PC-9 (cell line): ENCODE measurements at regions of chr15 and their contacts with region 1.

Region 1: GRCh38 chr15:100671858-100672543 is 69.6 kb downstream of the ASB7 start:
- DNase-seq: peak in 1 of 2 experiments; percentile 56
- H3K4me3 ChIP-seq: no peak overlapping the region
- H3K27ac ChIP-seq: peak overlapping the region; percentile 27; the same call in 1 of the 2 replicates
- H3K4me1 ChIP-seq: 0 out of 2 replicates have a peak, but pooled peaks cover 7% of the 10 kb centered on the region
- H3K27me3 ChIP-seq: no peaks in the 10 kb centered on the region
- CTCF ChIP-seq: peak; percentile 68

Region 2: DNA sequence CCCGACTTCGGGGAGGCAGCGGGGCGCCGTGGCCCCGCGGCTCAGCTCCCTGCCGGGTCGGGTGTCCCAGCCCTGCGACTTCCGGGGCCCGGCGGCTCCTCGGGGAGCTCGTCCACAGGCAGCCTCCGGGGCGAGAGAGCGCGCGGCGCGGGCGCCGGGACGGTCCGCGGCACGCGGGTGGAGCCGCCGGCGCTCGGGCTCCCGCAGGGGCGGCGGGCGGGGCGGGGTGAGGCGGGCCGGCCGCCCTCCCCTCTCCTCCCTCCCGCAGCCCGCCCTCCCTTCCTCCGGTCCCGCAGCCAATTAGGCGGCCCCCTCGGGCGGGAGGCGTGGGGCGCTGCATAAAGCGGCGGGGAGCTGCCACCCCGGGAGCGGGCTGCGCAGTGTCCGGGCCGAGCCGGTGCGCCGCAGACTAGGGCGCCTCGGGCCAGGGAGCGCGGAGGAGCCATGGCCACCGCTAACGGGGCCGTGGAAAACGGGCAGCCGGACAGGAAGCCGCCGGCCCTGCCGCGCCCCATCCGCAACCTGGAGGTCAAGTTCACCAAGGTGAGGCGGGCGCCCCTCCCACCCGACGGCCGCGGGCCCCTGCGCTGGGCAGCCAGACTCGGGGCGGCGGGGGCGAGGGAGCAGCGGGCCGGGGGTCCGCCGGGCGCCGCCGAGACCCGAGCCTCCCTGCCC is 207.6 kb after region 1 on chr15 and contains the start of gene ALDH1A3:
- CTCF ChIA-PET with region 1: interaction called, 12 read pairs
- POLR2A ChIA-PET with region 1: no interaction called
- intact Hi-C with region 1: loop called (anchors 1 kb)
- DNase-seq: peak; percentile 70 to 90
- H3K4me3 ChIP-seq: peak within 1 kb of the TSS; percentile 94
- H3K27ac ChIP-seq: peak within 1 kb of the TSS; percentile 75
- H3K4me1 ChIP-seq: peaks cover 29% of the 10 kb centered on the region
- H3K27me3 ChIP-seq: no peaks in the 10 kb centered on the region
- CTCF ChIP-seq: no peak
- total RNA-seq, gene ALDH1A3: 462 and 469 TPM in 2 replicates